ENCODE measurements at regions of chr12 and their contacts with region 1.

Region 1: DNA sequence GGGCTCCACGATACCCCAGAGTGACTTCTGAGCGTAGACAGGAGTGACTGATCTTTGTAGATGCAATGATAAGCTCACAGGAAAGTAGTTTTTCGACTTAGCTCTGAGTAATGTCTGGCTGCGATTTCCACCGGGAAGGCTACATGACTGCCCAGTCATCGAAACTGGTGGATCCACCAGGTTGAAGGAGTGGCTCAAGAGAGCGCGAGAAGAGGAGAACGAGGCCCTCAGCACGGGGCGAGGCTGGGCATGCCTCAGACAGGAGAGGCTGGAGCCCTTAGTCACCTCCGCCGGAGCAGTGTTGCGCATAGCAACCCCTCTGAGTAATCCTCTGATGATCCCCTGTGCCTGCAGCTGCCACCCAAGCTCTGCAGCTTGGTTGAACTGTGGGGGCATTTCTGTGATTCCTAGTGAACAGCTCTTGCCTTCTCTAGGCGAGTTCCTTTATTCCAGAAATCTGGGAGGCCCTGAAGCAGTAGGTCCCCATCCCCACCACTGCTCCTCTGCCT is 25.6 kb downstream of the ELK3 start:
- DNase-seq: peak in 1 of 2 donors; percentile 55
- H3K4me3 ChIP-seq: peak overlapping the region in 1 of 3 donors; percentile 51
- H3K27ac ChIP-seq: peak overlapping the region; percentile 67 to 85
- H3K4me1 ChIP-seq: peaks cover 0 to 7% of the 10 kb centered on the region in 2 donors
- H3K27me3 ChIP-seq: no peaks in the 10 kb centered on the region
- CTCF ChIP-seq: no peak
- POLR2A ChIP-seq: no peak

Region 2: GRCh38 chr12:95942524-95943329 is 277.0 kb before region 1 on chr12 and contains the start of gene CCDC38:
- intact Hi-C with region 1: no loop called
- DNase-seq: peak; percentile 65
- H3K4me3 ChIP-seq: peak within 1 kb of the TSS; percentile 65 to 77 (median 76)
- H3K27ac ChIP-seq: peak within 1 kb of the TSS; percentile 91 to 94
- H3K4me1 ChIP-seq: no peaks in the 10 kb centered on the region
- H3K27me3 ChIP-seq: no peaks in the 10 kb centered on the region
- CTCF ChIP-seq: no peak
- POLR2A ChIP-seq: no peak
- total RNA-seq, gene CCDC38: 0.73 TPM in 1 of 3 donors, not detected in the others

Region 3: GRCh38 chr12:96061864-96062453 is 157.8 kb before region 1 on chr12:
- intact Hi-C with region 1: loop called (anchors 10 kb)
- DNase-seq: peak; percentile 61 to 64
- H3K4me3 ChIP-seq: no peak overlapping the region
- H3K27ac ChIP-seq: no peak overlapping the region
- H3K4me1 ChIP-seq: no peaks in the 10 kb centered on the region
- H3K27me3 ChIP-seq: no peaks in the 10 kb centered on the region
- CTCF ChIP-seq: peak; percentile 65 to 88 (median 69)
- POLR2A ChIP-seq: no peak

Region 4: GRCh38 chr12:96193725-96194575 is 25.8 kb before region 1 on chr12 and contains the start of gene ELK3:
- intact Hi-C with region 1: loop called (anchors 2 kb)
- DNase-seq: peak in 1 of 2 donors; percentile 51
- H3K4me3 ChIP-seq: peak within 1 kb of the TSS; percentile 79 to 95 (median 83)
- H3K27ac ChIP-seq: peak within 1 kb of the TSS; percentile 78 to 95
- H3K4me1 ChIP-seq: no peaks in the 10 kb centered on the region
- H3K27me3 ChIP-seq: no peaks in the 10 kb centered on the region
- CTCF ChIP-seq: no peak
- POLR2A ChIP-seq: no peak
- total RNA-seq, gene ELK3: 13.9 to 28.5 (median 16.5) TPM

Region 5: DNA sequence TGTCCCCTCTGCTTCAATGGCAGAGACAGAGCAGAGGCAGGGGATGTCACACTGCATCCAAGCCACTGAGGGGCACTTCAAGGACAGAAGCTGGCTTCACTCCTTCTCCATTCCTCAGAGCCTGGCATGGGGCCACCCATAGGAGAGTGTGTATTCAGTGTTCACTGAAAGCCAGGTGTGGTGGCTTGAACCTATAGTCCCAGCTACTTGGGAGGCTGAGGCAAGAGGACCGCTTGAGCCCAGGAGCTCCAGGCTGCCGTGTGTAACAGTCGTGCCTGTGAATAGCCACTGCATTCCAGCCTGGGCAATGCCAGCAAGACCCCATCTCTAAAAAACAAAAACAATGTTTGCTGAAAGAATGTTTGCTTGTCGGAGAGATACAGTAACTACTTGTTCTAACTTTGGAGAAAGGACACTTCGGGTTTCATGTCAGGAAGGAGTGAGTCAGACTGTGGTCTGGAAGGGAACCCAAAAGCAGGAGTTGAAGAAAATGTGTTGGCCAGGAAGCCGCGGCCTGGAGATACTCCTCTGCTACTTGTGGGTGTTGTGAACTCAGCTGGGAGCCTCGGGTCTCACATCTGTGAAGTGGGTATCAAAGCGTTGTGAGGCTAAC is 17.8 kb after region 1 on chr12:
- intact Hi-C with region 1: no loop called
- DNase-seq: peak in 1 of 2 donors; percentile 87
- H3K4me3 ChIP-seq: peak overlapping the region in 2 of 3 donors; percentile 17 to 47
- H3K27ac ChIP-seq: peak overlapping the region; percentile 92 to 95
- H3K4me1 ChIP-seq: peaks cover 24 to 27% of the 10 kb centered on the region in 2 donors
- H3K27me3 ChIP-seq: no peaks in the 10 kb centered on the region
- CTCF ChIP-seq: peak in 2 of 3 donors; percentile 11 to 15
- POLR2A ChIP-seq: no peak